ENCODE measurements at regions of chr12 and their contacts with region 1.

Region 1: DNA sequence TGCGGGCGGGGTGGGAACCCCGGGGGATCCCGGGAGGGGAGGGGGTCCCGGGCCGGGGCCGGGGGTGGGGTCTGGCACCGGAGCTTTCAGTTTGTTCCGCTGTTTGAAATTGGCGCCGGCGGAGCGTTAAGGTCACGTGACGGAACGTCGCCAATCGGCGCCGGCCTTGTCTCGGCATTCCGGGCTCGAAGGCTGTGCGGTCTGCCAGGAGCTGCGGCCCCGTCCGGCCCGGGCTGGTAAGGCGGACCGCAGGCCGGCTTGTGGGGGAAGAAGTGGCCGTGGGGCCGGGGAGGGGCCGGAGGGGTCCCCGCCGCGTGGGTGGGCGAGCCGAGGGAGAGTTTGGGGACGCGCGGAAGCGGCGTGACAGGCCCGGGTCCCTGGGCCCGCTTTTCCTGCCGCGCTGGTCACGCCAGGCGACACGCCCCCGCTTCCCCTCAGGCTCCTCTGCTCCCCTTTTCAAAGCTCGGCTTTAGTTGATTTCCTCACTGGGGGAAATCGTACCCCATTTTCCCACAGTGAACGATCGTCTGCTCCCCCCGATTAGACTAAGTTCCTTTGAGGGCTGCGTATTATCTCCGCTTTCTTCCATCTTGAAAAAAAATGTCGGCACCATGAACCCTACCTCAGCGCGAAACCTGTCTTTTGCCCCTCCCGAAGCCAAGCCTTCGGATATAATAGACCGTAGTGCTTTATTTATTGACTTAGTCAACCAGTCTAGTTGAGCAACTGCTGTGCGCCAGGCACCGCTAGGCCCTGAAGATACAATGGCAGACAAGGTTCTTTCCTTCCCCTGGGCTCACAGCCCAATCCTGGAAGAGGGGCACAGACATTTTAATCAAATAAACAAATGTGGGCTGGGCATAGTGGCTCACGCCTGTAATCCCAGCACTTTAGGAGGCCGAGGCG is at the starts of genes FOXM1 and RHNO1:
- DNase-seq: peak; percentile 92
- ATAC-seq: peak; percentile 83
- H3K4me3 Mint-ChIP-seq: peak within 1 kb of the TSS; percentile 95
- H3K27ac Mint-ChIP-seq: peak within 1 kb of the TSS; percentile 97
- H3K4me1 Mint-ChIP-seq: peaks cover 49% of the 10 kb centered on the region
- H3K27me3 Mint-ChIP-seq: no peaks in the 10 kb centered on the region
- total RNA-seq, gene FOXM1: 130 to 155 TPM
- total RNA-seq, gene RHNO1: 43.4 to 49.2 TPM

Region 2: DNA sequence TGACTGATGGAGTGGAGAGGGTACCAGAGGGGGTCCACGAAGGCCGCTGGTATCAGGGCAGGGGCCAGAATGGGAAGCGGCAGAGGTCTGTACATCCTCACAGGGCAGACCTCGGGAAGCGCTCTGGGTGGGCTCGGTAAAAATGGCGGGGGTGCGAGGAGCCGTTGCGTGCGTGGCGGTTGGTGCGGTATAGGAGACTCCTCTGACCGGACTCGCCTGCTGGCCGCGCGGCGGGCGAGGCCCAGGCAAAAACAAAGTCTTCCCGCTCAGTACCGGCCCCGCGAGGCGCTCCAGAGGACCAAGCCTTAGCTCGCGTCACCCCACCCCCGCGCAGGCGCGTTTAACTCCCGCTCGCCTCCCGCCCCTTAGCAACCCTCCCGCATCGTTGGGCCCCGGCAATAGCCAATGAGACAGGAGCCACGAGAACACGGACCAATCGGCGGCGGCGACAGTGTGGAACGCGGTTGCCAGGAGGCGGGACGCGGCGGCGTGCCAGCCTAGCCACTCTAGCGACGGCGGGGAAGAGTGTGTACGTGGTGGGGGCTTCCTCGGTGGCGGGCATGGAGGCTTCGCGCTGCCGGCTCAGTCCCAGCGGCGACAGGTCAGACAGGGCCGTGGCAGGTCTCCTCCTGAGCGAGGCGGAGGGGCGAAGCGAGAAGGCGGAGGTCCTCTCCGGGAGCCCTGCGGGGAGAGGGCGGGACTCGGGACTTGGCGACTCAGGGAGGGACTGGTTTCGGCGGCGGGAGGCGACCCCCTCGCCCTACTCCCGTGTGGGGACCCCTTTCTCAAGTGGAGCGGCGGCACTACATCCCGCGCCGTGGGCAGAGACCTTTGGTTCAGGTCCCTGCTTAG is 13.3 kb after region 1 on chr12 and contains the start of gene TULP3:
- CTCF ChIA-PET with region 1: interaction called, 15 read pairs
- DNase-seq: peak; percentile 98
- ATAC-seq: peak; percentile 98
- H3K4me3 Mint-ChIP-seq: peak within 1 kb of the TSS; percentile 93
- H3K27ac Mint-ChIP-seq: peak within 1 kb of the TSS; percentile 91
- H3K4me1 Mint-ChIP-seq: peaks cover 36% of the 10 kb centered on the region
- H3K27me3 Mint-ChIP-seq: no peaks in the 10 kb centered on the region
- total RNA-seq, gene TULP3: 7.5 to 7.8 TPM

Measured in activated CD8-positive, alpha-beta memory T cell treated with anti-CD3 and anti-CD28 coated beads, Interleukin-2, amount 10 ng/mL, durations not matched to agents 7 days and 5 days (primary cell).